Activated CD4-positive, alpha-beta memory T cell treated with anti-CD3 and anti-CD28 coated beads for 36 hours (primary cell): ENCODE measurements at regions of chr7 and their contacts with region 1.

Region 1: GRCh38 chr7:152336754-152337368 is 98.9 kb downstream of the KMT2C start:
- DNase-seq: no peak
- H3K4me3 Mint-ChIP-seq: no peak overlapping the region
- H3K27ac Mint-ChIP-seq: peak overlapping the region; percentile 74
- H3K4me1 Mint-ChIP-seq: peaks cover 38% of the 10 kb centered on the region
- H3K27me3 Mint-ChIP-seq: no peaks in the 10 kb centered on the region

Region 2: DNA sequence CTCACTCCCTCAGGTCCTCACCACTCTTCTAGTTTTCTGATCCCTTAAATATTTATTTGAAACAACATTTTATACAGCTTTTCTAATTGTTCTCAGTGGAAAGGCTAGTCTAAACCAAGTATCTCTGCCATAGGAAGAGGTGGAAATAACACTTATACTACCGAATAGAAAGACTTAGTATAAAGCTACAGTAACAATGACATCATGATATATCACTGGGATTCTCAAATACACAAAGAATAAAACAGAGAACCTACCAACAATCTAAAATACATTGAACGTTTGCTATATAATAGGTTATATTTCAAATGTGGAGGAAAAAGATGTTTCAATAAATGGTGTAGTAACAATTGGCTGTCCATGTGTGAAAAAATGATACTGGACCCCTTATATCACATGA is 44.0 kb before region 1 on chr7:
- CTCF ChIA-PET with region 1: no interaction called
- POLR2A ChIA-PET with region 1: no interaction called
- intact Hi-C with region 1: no loop called
- DNase-seq: no peak
- H3K4me3 Mint-ChIP-seq: no peak overlapping the region
- H3K27ac Mint-ChIP-seq: no peak overlapping the region
- H3K4me1 Mint-ChIP-seq: no peaks in the 10 kb centered on the region
- H3K27me3 Mint-ChIP-seq: no peaks in the 10 kb centered on the region

Region 3: GRCh38 chr7:152313831-152314604 is 22.8 kb before region 1 on chr7:
- CTCF ChIA-PET with region 1: interaction called, 10 read pairs
- POLR2A ChIA-PET with region 1: no interaction called
- intact Hi-C with region 1: no loop called
- DNase-seq: no peak
- H3K4me3 Mint-ChIP-seq: no peak overlapping the region
- H3K27ac Mint-ChIP-seq: no peak overlapping the region
- H3K4me1 Mint-ChIP-seq: peaks cover 25% of the 10 kb centered on the region
- H3K27me3 Mint-ChIP-seq: no peaks in the 10 kb centered on the region

Region 4: DNA sequence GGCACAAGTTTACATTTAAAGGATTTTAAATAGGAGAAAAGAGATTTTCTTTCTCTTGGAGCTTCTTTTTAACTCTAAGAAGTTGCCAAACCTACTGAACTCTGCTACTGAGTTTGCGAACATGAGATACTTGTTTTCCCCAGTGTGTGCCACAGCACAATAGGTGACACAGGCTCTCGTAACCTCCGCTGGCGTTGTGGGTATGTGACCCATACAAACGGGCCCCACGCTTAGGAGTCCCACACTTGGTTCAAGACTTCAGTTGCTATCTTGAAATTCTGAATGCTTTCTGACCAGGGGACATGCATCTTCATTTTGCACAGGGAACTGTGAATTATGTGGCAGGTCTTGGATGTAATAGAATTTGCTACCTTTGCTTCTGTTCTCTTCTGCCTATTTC is 370.9 kb after region 1 on chr7:
- CTCF ChIA-PET with region 1: interaction called, 12 read pairs
- POLR2A ChIA-PET with region 1: no interaction called
- intact Hi-C with region 1: loop called (anchors 2 kb)
- DNase-seq: no peak
- H3K4me3 Mint-ChIP-seq: no peak overlapping the region
- H3K27ac Mint-ChIP-seq: no peak overlapping the region
- H3K4me1 Mint-ChIP-seq: no peaks in the 10 kb centered on the region
- H3K27me3 Mint-ChIP-seq: no peaks in the 10 kb centered on the region